A673 (cell line): ENCODE measurements at regions of chr12 and their contacts with region 1.

Region 1: DNA sequence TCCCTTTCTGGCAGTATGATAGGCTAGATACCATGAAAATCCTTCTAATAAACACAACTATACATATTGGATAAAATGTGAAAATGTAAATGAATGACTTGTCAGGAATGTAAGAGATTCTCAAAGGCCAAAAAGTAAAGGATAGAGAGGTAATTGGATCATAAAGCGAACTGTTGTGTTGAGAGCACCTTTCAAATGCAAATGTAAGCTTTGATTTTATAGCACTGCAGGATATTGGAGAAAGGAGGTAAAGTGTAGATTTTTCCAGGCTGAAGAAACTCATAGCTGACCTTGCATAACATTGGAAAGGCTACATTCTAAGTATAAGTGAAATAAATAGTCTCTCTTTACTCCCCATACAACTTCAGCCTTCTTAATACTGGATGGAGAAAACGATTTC is 54.0 kb downstream of the PTPRB start:
- DNase-seq: no peak
- H3K4me3 ChIP-seq: no peak overlapping the region
- H3K27ac ChIP-seq: no peak overlapping the region
- H3K4me1 ChIP-seq: no peaks in the 10 kb centered on the region
- H3K27me3 ChIP-seq: no peaks in the 10 kb centered on the region
- CTCF ChIP-seq: no peak

Region 2: GRCh38 chr12:69719382-69720316 is 863.6 kb before region 1 on chr12:
- CTCF ChIA-PET with region 1: interaction called, 10 read pairs
- POLR2A ChIA-PET with region 1: no interaction called
- intact Hi-C with region 1: no loop called
- DNase-seq: no peak
- H3K4me3 ChIP-seq: no peak overlapping the region
- H3K27ac ChIP-seq: no peak overlapping the region
- H3K4me1 ChIP-seq: no peaks in the 10 kb centered on the region
- H3K27me3 ChIP-seq: no peaks in the 10 kb centered on the region
- CTCF ChIP-seq: no peak

Region 3: DNA sequence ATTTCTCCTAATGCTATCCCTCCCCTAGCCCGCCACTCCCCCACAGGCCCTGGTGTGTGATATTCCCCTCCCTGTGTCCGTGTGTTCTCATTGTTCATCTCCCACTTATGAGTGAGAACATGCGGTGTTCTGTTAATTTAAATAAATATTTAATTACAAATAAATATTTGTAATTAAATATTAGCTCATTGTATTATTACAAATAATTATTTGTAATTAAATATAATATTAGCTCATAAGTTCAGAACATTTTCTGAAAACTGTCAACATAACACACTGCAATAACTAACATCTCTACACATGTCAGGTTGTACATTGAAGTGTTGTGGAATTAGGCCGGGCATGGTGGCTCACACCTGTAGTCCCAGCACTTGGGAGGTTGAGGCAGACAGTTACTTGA is 839.1 kb before region 1 on chr12:
- CTCF ChIA-PET with region 1: no interaction called
- POLR2A ChIA-PET with region 1: no interaction called
- intact Hi-C with region 1: no loop called
- DNase-seq: no peak
- H3K4me3 ChIP-seq: no peak overlapping the region
- H3K27ac ChIP-seq: no peak overlapping the region
- H3K4me1 ChIP-seq: peaks cover 11% of the 10 kb centered on the region
- H3K27me3 ChIP-seq: no peaks in the 10 kb centered on the region
- CTCF ChIP-seq: no peak

Region 4: DNA sequence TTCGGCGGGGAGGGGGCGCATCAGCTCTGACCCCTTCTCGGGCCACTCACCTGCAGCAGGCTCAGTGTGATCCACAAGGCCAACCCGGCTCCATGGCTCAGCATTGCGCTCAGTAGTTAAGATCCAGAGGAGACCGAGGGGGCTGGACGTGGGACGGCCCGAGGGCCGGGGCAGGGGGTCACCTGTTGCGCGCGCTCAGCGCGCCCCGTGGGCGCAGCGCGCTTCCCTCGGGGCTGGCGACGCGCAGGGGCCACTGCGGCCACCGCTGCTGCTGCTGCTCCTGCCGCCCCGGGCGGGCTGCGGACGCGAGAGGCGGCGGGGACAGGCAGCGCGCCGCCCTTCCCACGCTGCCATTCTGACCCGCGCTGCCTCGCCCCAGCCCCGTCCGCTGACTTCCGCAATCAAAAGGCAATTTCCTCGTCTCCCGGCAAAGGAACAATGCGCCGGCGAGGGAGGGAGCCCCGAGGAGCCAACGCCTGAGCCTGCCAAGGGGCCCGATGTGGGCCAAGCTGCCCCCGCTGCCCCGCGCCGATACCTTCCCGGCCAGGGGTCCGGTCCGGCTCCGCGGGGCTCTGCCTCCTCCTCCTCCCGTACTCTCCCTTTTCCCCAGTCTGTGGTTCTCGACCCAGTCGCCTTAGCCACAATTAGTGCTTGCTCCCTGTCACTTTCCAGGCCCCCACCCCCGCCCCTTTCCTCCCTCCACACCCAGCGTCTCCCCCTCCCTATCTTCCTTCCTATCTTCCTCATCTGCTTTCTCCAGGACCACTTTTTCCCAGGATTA is 26.6 kb after region 1 on chr12:
- CTCF ChIA-PET with region 1: no interaction called
- POLR2A ChIA-PET with region 1: no interaction called
- intact Hi-C with region 1: no loop called
- DNase-seq: peak; percentile 18
- H3K4me3 ChIP-seq: peak overlapping the region; percentile 42
- H3K27ac ChIP-seq: no peak overlapping the region
- H3K4me1 ChIP-seq: no peaks in the 10 kb centered on the region
- H3K27me3 ChIP-seq: peaks cover 27% of the 10 kb centered on the region
- CTCF ChIP-seq: no peak